GM12878 (cell line): ENCODE measurements at regions of chr11 and their contacts with region 1.

Region 1: GRCh38 chr11:2532704-2533586 is 88.1 kb downstream of the KCNQ1 start:
- DNase-seq: peak; percentile 38
- ATAC-seq: peak; percentile 92
- H3K4me3 ChIP-seq: no peak overlapping the region
- H3K27ac ChIP-seq: no peak overlapping the region
- H3K4me1 ChIP-seq: peaks cover 8% of the 10 kb centered on the region
- H3K27me3 ChIP-seq: peaks cover 1 to 3% of the 10 kb centered on the region in 2 experiments; a peak in 1 of 4 replicates
- CTCF ChIP-seq: peak; percentile 94 to 98 (median 98)
- EP300 ChIP-seq: no peak
- POLR2A ChIP-seq: no peak
- RAD21 ChIP-seq: peak; percentile 93

Region 2: GRCh38 chr11:2305140-2305840 is 227.7 kb before region 1 on chr11:
- CTCF ChIA-PET with region 1: interaction called, 17 read pairs
- POLR2A ChIA-PET with region 1: no interaction called
- RAD21 ChIA-PET with region 1: interaction called, 3 read pairs
- SMC1A ChIA-PET with region 1: no interaction called
- in situ Hi-C with region 1: no loop called
- intact Hi-C with region 1: loop called (anchors 2 kb)
- DNase-seq: peak; percentile 4
- ATAC-seq: peak; percentile 92
- H3K4me3 ChIP-seq: no peak overlapping the region
- H3K27ac ChIP-seq: no peak overlapping the region
- H3K4me1 ChIP-seq: no peaks in the 10 kb centered on the region
- H3K27me3 ChIP-seq: no peaks in the 10 kb centered on the region; a peak in 1 of 4 replicates
- CTCF ChIP-seq: peak; percentile 76 to 93 (median 84)
- EP300 ChIP-seq: no peak
- POLR2A ChIP-seq: no peak
- RAD21 ChIP-seq: peak; percentile 87

Region 3: GRCh38 chr11:2325719-2326118 is 207.2 kb before region 1 on chr11:
- CTCF ChIA-PET with region 1: no interaction called
- POLR2A ChIA-PET with region 1: no interaction called
- RAD21 ChIA-PET with region 1: no interaction called
- SMC1A ChIA-PET with region 1: no interaction called
- in situ Hi-C with region 1: no loop called
- intact Hi-C with region 1: no loop called
- DNase-seq: no peak
- ATAC-seq: no peak
- H3K4me3 ChIP-seq: no peak overlapping the region
- H3K27ac ChIP-seq: no peak overlapping the region
- H3K4me1 ChIP-seq: no peaks in the 10 kb centered on the region
- H3K27me3 ChIP-seq: no peaks in the 10 kb centered on the region
- CTCF ChIP-seq: no peak
- EP300 ChIP-seq: no peak
- POLR2A ChIP-seq: no peak
- RAD21 ChIP-seq: no peak

Region 4: DNA sequence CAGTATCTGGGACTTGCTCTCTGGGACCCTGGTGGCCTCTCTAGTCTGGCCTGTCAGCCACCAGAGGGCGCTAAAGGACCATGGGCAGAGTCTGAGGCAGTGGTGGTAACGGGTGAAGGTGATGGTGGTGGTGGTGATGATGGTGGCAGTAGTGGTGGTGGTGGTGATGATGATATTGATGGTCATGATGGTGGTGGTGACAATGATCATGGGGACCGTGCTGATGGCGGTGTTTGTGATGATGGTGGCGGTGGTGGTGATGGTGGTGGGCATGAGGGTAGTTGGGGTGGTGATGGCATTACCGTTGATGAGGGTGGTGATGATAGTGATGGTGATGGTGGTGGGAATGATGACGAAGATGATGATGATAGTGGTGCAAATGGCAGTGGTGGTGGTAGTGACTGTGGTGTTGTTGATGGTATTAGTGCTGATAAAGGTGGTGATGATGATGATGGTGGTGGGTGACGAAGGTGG is 104.6 kb before region 1 on chr11:
- CTCF ChIA-PET with region 1: interaction called, 10 read pairs
- POLR2A ChIA-PET with region 1: no interaction called
- RAD21 ChIA-PET with region 1: interaction called, 5 read pairs
- SMC1A ChIA-PET with region 1: interaction called, 8 read pairs
- in situ Hi-C with region 1: loop called (anchors 5 kb)
- intact Hi-C with region 1: loop called (anchors 1 kb)
- DNase-seq: no peak
- ATAC-seq: peak; percentile 92
- H3K4me3 ChIP-seq: no peak overlapping the region
- H3K27ac ChIP-seq: no peak overlapping the region
- H3K4me1 ChIP-seq: no peaks in the 10 kb centered on the region
- H3K27me3 ChIP-seq: no peaks in the 10 kb centered on the region
- CTCF ChIP-seq: peak; percentile 81 to 92 (median 87)
- EP300 ChIP-seq: no peak
- POLR2A ChIP-seq: no peak
- RAD21 ChIP-seq: peak; percentile 98

Region 5: GRCh38 chr11:2522671-2523141 is 10.2 kb before region 1 on chr11:
- CTCF ChIA-PET with region 1: no interaction called
- POLR2A ChIA-PET with region 1: no interaction called
- RAD21 ChIA-PET with region 1: no interaction called
- SMC1A ChIA-PET with region 1: no interaction called
- in situ Hi-C with region 1: no loop called
- intact Hi-C with region 1: no loop called
- DNase-seq: no peak
- ATAC-seq: no peak
- H3K4me3 ChIP-seq: no peak overlapping the region
- H3K27ac ChIP-seq: no peak overlapping the region
- H3K4me1 ChIP-seq: peaks cover 10% of the 10 kb centered on the region
- H3K27me3 ChIP-seq: no peaks in the 10 kb centered on the region
- CTCF ChIP-seq: no peak
- EP300 ChIP-seq: no peak
- POLR2A ChIP-seq: no peak
- RAD21 ChIP-seq: no peak

Region 6: GRCh38 chr11:2561696-2562581 is 29.0 kb after region 1 on chr11:
- CTCF ChIA-PET with region 1: no interaction called
- POLR2A ChIA-PET with region 1: no interaction called
- RAD21 ChIA-PET with region 1: no interaction called
- SMC1A ChIA-PET with region 1: no interaction called
- in situ Hi-C with region 1: no loop called
- intact Hi-C with region 1: no loop called
- DNase-seq: no peak
- ATAC-seq: no peak
- H3K4me3 ChIP-seq: no peak overlapping the region
- H3K27ac ChIP-seq: no peak overlapping the region
- H3K4me1 ChIP-seq: no peaks in the 10 kb centered on the region
- H3K27me3 ChIP-seq: no peaks in the 10 kb centered on the region; a peak in 1 of 4 replicates
- CTCF ChIP-seq: no peak
- EP300 ChIP-seq: no peak
- POLR2A ChIP-seq: no peak
- RAD21 ChIP-seq: no peak

Region 7: GRCh38 chr11:2586087-2586792 is 53.3 kb after region 1 on chr11:
- CTCF ChIA-PET with region 1: no interaction called
- POLR2A ChIA-PET with region 1: no interaction called
- RAD21 ChIA-PET with region 1: no interaction called
- SMC1A ChIA-PET with region 1: no interaction called
- in situ Hi-C with region 1: no loop called
- intact Hi-C with region 1: no loop called
- DNase-seq: no peak
- ATAC-seq: no peak
- H3K4me3 ChIP-seq: no peak overlapping the region
- H3K27ac ChIP-seq: no peak overlapping the region
- H3K4me1 ChIP-seq: no peaks in the 10 kb centered on the region
- H3K27me3 ChIP-seq: no peaks in the 10 kb centered on the region
- CTCF ChIP-seq: no peak
- EP300 ChIP-seq: no peak
- POLR2A ChIP-seq: no peak
- RAD21 ChIP-seq: no peak

Region 8: GRCh38 chr11:2877474-2877873 is 344.5 kb after region 1 on chr11:
- CTCF ChIA-PET with region 1: interaction called, 12 read pairs
- POLR2A ChIA-PET with region 1: no interaction called
- RAD21 ChIA-PET with region 1: interaction called, 4 read pairs
- SMC1A ChIA-PET with region 1: no interaction called
- in situ Hi-C with region 1: no loop called
- intact Hi-C with region 1: no loop called
- DNase-seq: no peak
- ATAC-seq: no peak
- H3K4me3 ChIP-seq: no peak overlapping the region
- H3K27ac ChIP-seq: no peak overlapping the region
- H3K4me1 ChIP-seq: no peaks in the 10 kb centered on the region
- H3K27me3 ChIP-seq: peaks cover under 1 to 1% of the 10 kb centered on the region in 2 experiments; a peak in 2 of 4 replicates
- CTCF ChIP-seq: no peak
- EP300 ChIP-seq: no peak
- POLR2A ChIP-seq: no peak
- RAD21 ChIP-seq: no peak

Region 9: GRCh38 chr11:2892215-2893020 is 359.5 kb after region 1 on chr11:
- CTCF ChIA-PET with region 1: interaction called, 233 read pairs
- POLR2A ChIA-PET with region 1: interaction called, 3 read pairs
- RAD21 ChIA-PET with region 1: interaction called, 151 read pairs
- SMC1A ChIA-PET with region 1: interaction called, 108 read pairs
- in situ Hi-C with region 1: loop called (anchors 5 kb)
- intact Hi-C with region 1: loop called (anchors 1 kb)
- DNase-seq: no peak
- ATAC-seq: peak; percentile 80
- H3K4me3 ChIP-seq: peak overlapping the region; percentile 58
- H3K27ac ChIP-seq: no peak overlapping the region
- H3K4me1 ChIP-seq: peaks cover 4% of the 10 kb centered on the region
- H3K27me3 ChIP-seq: no peaks in the 10 kb centered on the region
- CTCF ChIP-seq: peak; percentile 82 to 92 (median 83)
- EP300 ChIP-seq: no peak
- POLR2A ChIP-seq: peak; percentile 59; the same call in 1 of the 2 replicates
- RAD21 ChIP-seq: peak; percentile 67